ENCODE measurements at regions of chr1 and their contacts with region 1.

Region 1: GRCh38 chr1:18972531-18972930 is 16.1 kb upstream of the IFFO2 start:
- DNase-seq: peak; percentile 55
- H3K4me3 ChIP-seq: no peak overlapping the region
- H3K27ac ChIP-seq: no peak overlapping the region
- H3K4me1 ChIP-seq: peaks cover 0 to 12% (median 5%) of the 10 kb centered on the region in 4 donors
- H3K27me3 ChIP-seq: no peaks in the 10 kb centered on the region
- CTCF ChIP-seq: peak; percentile 39 to 50 (median 44)
- EP300 ChIP-seq: no peak
- POLR2A ChIP-seq: no peak

Region 2: DNA sequence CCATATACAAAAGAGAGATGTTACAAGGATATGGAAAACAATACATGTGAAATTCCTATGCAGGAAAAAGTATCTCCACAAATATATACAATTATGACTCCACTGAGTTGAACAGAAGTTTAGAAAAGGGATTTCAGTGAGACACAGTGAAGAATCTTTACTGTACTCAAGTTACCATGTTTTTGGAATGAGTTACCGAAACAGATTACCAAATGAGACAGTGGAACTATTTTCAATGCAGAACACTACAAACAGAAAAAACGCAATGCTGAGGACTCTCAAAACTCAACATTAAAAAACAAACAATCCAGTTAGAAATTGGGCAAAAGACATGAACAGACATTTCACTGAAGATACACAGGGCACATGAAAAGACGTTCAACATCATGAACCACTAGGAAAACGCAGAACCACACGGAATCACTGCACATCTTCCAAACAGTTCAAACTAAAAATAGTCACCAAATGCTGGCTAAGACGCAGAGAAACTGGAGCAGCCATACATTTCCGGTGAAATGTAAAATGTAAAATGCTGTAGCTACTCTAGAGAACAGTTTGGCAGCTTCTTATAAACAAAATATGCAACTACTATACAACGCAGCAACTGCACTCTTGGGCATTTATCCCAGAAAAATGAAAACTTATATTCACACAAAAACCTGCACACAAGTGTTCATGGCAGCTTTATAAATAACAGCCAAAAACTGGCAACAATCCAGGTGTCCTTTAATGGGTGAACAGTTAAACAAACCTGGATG is 118.8 kb after region 1 on chr1:
- intact Hi-C with region 1: loop called (anchors 5 kb)
- DNase-seq: no peak
- H3K4me3 ChIP-seq: no peak overlapping the region
- H3K27ac ChIP-seq: peak overlapping the region; percentile 41 to 79 (median 58)
- H3K4me1 ChIP-seq: peaks cover 0 to 37% (median 28%) of the 10 kb centered on the region in 4 donors
- H3K27me3 ChIP-seq: no peaks in the 10 kb centered on the region
- CTCF ChIP-seq: no peak
- EP300 ChIP-seq: no peak
- POLR2A ChIP-seq: no peak

Region 3: DNA sequence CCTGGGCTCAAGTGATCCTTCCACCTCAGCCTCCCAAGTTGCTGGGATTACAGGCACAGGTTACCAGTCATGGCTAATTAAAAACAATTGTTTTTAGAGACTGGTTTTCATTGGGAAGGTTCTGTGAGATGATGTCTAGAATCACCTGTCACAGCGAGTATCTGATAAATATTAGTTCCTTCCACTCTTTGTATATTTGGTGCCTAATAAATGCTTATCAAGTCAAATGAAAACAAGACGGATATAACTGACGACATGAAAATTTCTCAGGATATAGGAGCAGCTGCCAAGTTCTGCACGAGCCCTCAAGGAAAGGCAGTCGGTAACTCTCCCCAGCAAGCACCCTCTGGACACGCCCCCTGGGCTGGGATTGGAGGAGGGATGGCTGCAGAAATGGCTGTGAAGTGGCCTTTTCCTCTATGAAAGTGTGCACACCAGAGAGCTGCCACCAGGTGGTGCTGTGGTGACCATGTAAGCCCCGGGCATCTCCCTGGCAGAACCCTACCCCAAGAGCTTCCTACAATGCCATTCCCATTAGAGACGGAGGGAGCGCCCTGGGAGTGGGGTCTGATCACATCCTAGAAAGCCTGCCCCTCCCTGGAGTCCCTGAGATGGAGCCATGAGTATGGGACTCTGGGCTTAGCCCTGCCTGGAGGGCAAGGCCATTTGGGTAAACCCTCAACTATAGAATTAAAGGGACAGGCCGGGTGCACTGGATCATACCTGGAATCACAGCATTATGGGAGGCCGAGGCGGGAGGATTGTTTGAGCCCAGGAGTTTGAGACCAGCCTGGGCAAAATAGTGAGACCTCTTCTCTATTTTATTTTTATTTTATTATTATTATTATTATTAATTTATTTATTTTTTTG is 743.0 kb after region 1 on chr1:
- intact Hi-C with region 1: no loop called
- DNase-seq: peak; percentile 94
- H3K4me3 ChIP-seq: no peak overlapping the region
- H3K27ac ChIP-seq: peak overlapping the region in 1 of 4 donors; percentile 23
- H3K4me1 ChIP-seq: peaks cover 0 to 6% (median 3%) of the 10 kb centered on the region in 4 donors
- H3K27me3 ChIP-seq: no peaks in the 10 kb centered on the region
- CTCF ChIP-seq: peak; percentile 51 to 84 (median 76)
- EP300 ChIP-seq: no peak
- POLR2A ChIP-seq: no peak